Activated B cell treated with CpG ODN at 0.5 μM for 24 hours (primary cell): ENCODE measurements at regions of chr15 and their contacts with region 1.

Region 1: GRCh38 chr15:70318594-70319465 is 221.1 kb upstream of the TLE3 start:
- DNase-seq: no peak
- ATAC-seq: peak; percentile 25
- H3K4me3 Mint-ChIP-seq: peak overlapping the region; percentile 72
- H3K27ac Mint-ChIP-seq: peak overlapping the region; percentile 85
- H3K4me1 Mint-ChIP-seq: peaks cover 57% of the 10 kb centered on the region
- H3K27me3 Mint-ChIP-seq: no peaks in the 10 kb centered on the region
- CTCF ChIP-seq: no peak

Region 2: GRCh38 chr15:69958494-69959084 is 360.2 kb before region 1 on chr15:
- CTCF ChIA-PET with region 1: no interaction called
- POLR2A ChIA-PET with region 1: no interaction called
- intact Hi-C with region 1: no loop called
- DNase-seq: no peak
- ATAC-seq: peak; percentile 31
- H3K4me3 Mint-ChIP-seq: no peak overlapping the region
- H3K27ac Mint-ChIP-seq: no peak overlapping the region
- H3K4me1 Mint-ChIP-seq: peaks cover 7% of the 10 kb centered on the region
- H3K27me3 Mint-ChIP-seq: peaks cover 11% of the 10 kb centered on the region
- CTCF ChIP-seq: no peak

Region 3: GRCh38 chr15:70036585-70037291 is 282.1 kb before region 1 on chr15:
- CTCF ChIA-PET with region 1: no interaction called
- POLR2A ChIA-PET with region 1: no interaction called
- intact Hi-C with region 1: loop called (anchors 2 kb)
- DNase-seq: no peak
- ATAC-seq: peak; percentile 55
- H3K4me3 Mint-ChIP-seq: peak overlapping the region; percentile 76
- H3K27ac Mint-ChIP-seq: peak overlapping the region; percentile 91
- H3K4me1 Mint-ChIP-seq: peaks cover 67% of the 10 kb centered on the region
- H3K27me3 Mint-ChIP-seq: no peaks in the 10 kb centered on the region
- CTCF ChIP-seq: no peak

Region 4: GRCh38 chr15:70240082-70240481 is 78.7 kb before region 1 on chr15:
- CTCF ChIA-PET with region 1: no interaction called
- POLR2A ChIA-PET with region 1: interaction called, 7 read pairs
- intact Hi-C with region 1: loop called (anchors 1 kb)
- DNase-seq: no peak
- ATAC-seq: peak; percentile 97
- H3K4me3 Mint-ChIP-seq: peak overlapping the region; percentile 39
- H3K27ac Mint-ChIP-seq: peak overlapping the region; percentile 62
- H3K4me1 Mint-ChIP-seq: peaks cover 49% of the 10 kb centered on the region
- H3K27me3 Mint-ChIP-seq: no peaks in the 10 kb centered on the region
- CTCF ChIP-seq: no peak

Region 5: GRCh38 chr15:70271422-70272088 is 47.3 kb before region 1 on chr15:
- CTCF ChIA-PET with region 1: no interaction called
- POLR2A ChIA-PET with region 1: interaction called, 7 read pairs
- intact Hi-C with region 1: loop called (anchors 1 kb)
- DNase-seq: no peak
- ATAC-seq: no peak
- H3K4me3 Mint-ChIP-seq: no peak overlapping the region
- H3K27ac Mint-ChIP-seq: no peak overlapping the region
- H3K4me1 Mint-ChIP-seq: peaks cover 57% of the 10 kb centered on the region
- H3K27me3 Mint-ChIP-seq: peaks cover 3% of the 10 kb centered on the region
- CTCF ChIP-seq: no peak

Region 6: GRCh38 chr15:70308011-70308734 is 10.7 kb before region 1 on chr15:
- CTCF ChIA-PET with region 1: interaction called, 3 read pairs
- POLR2A ChIA-PET with region 1: interaction called, 4 read pairs
- intact Hi-C with region 1: loop called (anchors 1 kb)
- DNase-seq: peak; percentile 54
- ATAC-seq: peak; percentile 91
- H3K4me3 Mint-ChIP-seq: peak overlapping the region; percentile 58
- H3K27ac Mint-ChIP-seq: peak overlapping the region; percentile 16
- H3K4me1 Mint-ChIP-seq: peaks cover 23% of the 10 kb centered on the region
- H3K27me3 Mint-ChIP-seq: no peaks in the 10 kb centered on the region
- CTCF ChIP-seq: no peak

Region 7: DNA sequence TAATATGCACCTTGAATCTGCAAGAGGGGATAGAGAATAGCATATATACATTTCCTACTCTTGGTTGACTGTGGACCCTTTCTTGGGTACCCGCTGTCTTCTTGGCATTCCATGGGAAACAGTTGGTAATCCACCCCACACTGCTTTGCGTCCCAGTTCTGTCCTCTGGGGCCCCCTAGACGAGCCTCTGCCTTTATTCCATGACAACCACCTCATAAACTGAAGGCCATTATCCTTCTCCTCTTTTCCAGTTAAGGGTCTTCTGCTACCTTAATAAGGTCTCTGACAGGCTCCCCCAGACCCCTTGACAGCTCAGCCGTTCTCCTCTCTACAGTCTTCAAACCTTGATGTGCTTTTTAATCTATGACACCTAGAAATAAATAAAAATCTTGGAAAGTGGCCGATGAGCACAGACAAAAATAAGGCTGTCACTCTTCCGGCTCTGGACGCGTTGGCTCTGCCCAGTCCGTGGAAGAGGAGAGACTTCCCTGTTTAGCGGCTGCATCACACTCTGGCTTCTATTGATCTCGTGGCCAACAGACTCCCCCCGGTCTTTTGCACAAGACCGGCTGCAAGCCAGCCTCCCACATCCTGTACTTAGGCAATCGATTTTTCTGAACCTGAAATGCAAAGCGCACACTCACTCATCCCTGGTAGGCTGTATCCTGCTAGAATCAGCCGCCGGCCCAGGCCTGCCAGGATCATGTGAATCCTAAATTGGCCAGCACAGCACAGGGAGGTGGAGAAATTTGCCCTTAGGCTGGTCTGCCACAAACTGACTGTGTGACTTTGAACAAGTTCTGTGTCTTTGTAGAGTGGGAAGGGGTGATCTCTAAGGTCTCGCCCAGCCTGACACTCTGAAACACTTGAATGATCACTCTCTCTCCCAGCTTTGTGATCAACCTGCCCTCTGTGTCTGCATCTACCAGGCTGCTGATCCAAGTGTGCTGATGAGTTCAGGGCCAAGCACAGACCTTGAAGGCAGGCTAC is 30.0 kb after region 1 on chr15:
- CTCF ChIA-PET with region 1: no interaction called
- POLR2A ChIA-PET with region 1: no interaction called
- intact Hi-C with region 1: no loop called
- DNase-seq: no peak
- ATAC-seq: no peak
- H3K4me3 Mint-ChIP-seq: no peak overlapping the region
- H3K27ac Mint-ChIP-seq: no peak overlapping the region
- H3K4me1 Mint-ChIP-seq: peaks cover 15% of the 10 kb centered on the region
- H3K27me3 Mint-ChIP-seq: no peaks in the 10 kb centered on the region
- CTCF ChIP-seq: no peak

Region 8: DNA sequence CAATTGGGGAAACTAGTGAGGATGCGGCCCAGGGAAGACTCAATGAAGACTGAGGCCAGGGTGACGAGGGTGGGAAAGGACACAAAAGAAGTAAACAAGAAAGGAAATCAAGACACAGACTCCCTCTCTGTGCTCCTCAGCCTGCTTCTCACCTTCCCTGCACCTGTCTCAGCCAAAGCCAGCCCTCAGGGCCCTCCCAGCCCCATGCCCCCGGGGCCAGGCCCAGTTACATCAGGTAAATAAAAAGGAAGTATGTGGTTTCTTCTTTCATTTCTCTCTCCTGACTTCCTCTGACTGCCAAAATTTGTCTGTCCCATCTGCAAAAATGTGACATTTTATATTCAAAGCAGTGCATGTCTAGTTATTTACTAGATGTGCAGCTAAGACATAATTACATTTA is 116.5 kb after region 1 on chr15:
- CTCF ChIA-PET with region 1: no interaction called
- POLR2A ChIA-PET with region 1: no interaction called
- intact Hi-C with region 1: loop called (anchors 5 kb)
- DNase-seq: peak; percentile 44
- ATAC-seq: peak; percentile 93
- H3K4me3 Mint-ChIP-seq: peak overlapping the region; percentile 55
- H3K27ac Mint-ChIP-seq: peak overlapping the region; percentile 67
- H3K4me1 Mint-ChIP-seq: peaks cover 28% of the 10 kb centered on the region
- H3K27me3 Mint-ChIP-seq: no peaks in the 10 kb centered on the region
- CTCF ChIP-seq: no peak